ENCODE measurements at regions of chr2 and their contacts with region 1.

Region 1: DNA sequence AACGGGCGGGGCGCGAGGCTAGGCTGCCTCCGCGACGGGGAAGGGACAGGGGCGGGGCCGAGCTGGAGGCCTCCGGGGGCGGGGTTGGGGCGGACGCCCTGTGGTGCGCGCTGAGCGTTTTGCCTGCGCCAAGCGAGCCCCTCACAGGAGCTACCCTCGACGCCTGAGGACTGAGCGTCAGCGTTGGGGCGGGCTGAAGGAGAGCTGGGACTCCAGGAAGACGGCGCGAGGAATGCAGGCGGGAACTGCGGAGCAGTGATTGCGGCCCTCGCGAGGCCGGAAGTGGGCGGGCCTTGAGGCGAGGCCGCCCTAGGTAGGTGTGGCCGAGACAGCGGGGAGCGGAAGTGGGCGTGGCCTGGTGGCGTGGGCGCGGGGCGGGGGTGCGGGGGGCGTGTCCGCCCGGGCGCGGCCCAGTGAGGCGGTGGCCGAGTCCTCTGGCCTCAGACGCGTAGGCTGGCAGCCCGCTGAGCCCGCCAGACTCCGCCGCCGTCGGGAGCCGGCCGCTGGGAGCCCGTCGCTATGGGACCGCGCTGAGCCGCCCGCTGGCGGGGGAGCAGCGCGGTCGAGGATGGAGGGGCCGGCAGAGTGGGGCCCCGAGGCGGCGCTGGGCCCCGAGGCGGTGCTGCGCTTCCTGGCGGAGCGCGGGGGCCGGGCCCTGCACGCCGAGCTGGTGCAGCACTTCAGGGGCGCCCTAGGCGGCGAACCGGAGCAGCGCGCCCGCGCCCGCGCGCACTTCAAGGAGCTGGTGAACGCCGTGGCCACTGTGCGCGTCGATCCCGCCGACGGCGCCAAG is at the starts of genes SEPTIN10 and SOWAHC:
- DNase-seq: peak; percentile 97
- total RNA-seq, gene SEPTIN10: 57.4 TPM
- total RNA-seq, gene SOWAHC: 2.4 TPM

Region 2: GRCh38 chr2:107986278-107987217 is 1627.6 kb before region 1 on chr2 and contains the start of gene SLC5A7:
- intact Hi-C with region 1: no loop called
- DNase-seq: no peak
- total RNA-seq, gene SLC5A7: not detected

Region 3: DNA sequence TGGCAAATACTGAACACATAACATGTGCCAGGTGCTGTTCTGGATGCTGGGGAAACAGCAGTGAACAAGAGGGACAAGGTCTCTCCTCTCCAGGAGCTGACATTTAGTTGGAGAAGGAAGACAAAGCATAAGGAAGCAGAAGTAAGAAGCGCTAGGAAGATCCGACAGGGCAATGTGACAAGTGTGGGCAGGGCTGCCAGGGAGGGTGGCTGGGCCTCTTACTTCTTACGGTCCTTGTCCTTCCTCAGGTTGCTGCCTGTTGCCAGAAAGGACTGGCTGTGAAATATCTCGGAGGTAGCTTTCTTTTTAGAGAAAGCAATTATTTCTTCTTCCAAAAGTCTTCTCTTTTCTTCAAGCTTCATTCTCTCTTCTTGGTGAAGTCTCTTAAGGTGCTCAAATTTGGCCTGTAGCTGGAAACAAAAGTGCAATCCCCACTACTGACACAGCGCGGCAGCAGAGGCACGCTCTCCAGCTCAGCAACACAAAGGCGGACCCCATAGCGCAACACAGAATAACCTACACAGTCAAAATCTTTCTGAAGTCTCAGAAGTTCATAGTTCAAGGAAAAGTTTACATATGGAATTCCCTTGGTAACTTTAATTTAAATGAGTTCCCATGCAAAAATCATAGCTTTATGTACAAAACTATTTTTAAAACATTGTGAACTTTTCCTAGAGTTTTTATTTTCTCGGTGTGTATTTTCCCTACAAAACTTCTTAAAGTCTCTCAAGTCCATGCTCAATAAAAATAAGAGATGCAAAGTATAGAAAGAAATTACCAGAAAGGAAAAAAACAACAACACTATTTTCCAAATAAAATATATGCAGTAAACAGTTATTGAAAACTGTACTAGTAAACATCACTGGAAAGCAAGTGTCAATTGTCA is 68.0 kb before region 1 on chr2:
- intact Hi-C with region 1: loop called (anchors 5 kb)
- DNase-seq: peak; percentile 78

Region 4: DNA sequence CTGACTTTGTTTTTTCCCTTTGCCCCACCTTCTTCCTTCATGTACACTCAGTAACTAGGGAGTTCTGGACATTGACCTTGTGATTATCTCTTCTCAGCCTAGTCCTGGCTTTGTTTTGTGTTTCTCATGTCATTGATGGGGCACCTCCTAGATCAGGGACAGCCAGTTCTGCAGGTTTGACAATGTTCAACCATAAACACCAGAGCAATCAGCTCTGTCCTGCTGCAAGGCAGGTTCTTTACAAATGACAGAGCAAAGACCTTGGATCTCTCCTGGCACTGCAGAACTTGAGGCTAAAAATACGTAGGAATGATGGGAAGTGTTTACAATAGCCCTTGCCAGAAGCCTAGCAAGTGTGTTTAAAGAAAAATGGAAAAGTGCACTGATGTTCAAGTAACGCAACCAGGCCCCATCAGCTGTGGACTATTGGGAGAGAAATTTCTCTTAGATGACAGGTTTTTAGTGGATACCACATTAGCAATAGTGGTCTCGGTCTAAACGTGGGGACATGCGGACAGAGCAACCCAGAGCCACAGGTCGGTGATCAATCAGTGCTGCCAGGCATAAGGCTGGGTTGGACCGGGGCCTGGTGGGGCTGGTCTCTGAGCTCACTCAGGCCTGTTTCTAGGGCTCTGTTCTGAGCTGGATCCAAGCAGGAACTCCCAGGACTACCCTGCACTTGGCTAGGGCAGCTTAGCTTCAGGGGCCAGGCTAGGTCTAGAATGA is 76.9 kb after region 1 on chr2:
- intact Hi-C with region 1: loop called (anchors 5 kb)
- DNase-seq: peak; percentile 74

Measured in cardiac septum (tissue), 1 donor.